PC-9 (cell line): ENCODE measurements at regions of chr7 and their contacts with region 1.

Region 1: GRCh38 chr7:94067506-94067905 is 63.4 kb upstream of the BET1 start:
- DNase-seq: no peak
- H3K4me3 ChIP-seq: no peak overlapping the region
- H3K27ac ChIP-seq: no peak overlapping the region
- H3K4me1 ChIP-seq: peaks cover 26% of the 10 kb centered on the region
- H3K27me3 ChIP-seq: no peaks in the 10 kb centered on the region
- CTCF ChIP-seq: no peak

Region 2: GRCh38 chr7:92121681-92122080 is 1945.8 kb before region 1 on chr7:
- CTCF ChIA-PET with region 1: interaction called, 14 read pairs
- POLR2A ChIA-PET with region 1: no interaction called
- intact Hi-C with region 1: no loop called
- DNase-seq: no peak
- H3K4me3 ChIP-seq: no peak overlapping the region
- H3K27ac ChIP-seq: no peak overlapping the region
- H3K4me1 ChIP-seq: no peaks in the 10 kb centered on the region
- H3K27me3 ChIP-seq: no peaks in the 10 kb centered on the region
- CTCF ChIP-seq: no peak

Region 3: GRCh38 chr7:93646538-93646937 is 421.0 kb before region 1 on chr7:
- CTCF ChIA-PET with region 1: no interaction called
- POLR2A ChIA-PET with region 1: no interaction called
- intact Hi-C with region 1: no loop called
- DNase-seq: no peak
- H3K4me3 ChIP-seq: no peak overlapping the region
- H3K27ac ChIP-seq: no peak overlapping the region
- H3K4me1 ChIP-seq: no peaks in the 10 kb centered on the region
- H3K27me3 ChIP-seq: no peaks in the 10 kb centered on the region
- CTCF ChIP-seq: no peak

Region 4: GRCh38 chr7:93873998-93874574 is 193.4 kb before region 1 on chr7:
- CTCF ChIA-PET with region 1: no interaction called
- POLR2A ChIA-PET with region 1: no interaction called
- intact Hi-C with region 1: no loop called
- DNase-seq: no peak
- H3K4me3 ChIP-seq: no peak overlapping the region
- H3K27ac ChIP-seq: no peak overlapping the region
- H3K4me1 ChIP-seq: no peaks in the 10 kb centered on the region
- H3K27me3 ChIP-seq: no peaks in the 10 kb centered on the region
- CTCF ChIP-seq: no peak

Region 5: DNA sequence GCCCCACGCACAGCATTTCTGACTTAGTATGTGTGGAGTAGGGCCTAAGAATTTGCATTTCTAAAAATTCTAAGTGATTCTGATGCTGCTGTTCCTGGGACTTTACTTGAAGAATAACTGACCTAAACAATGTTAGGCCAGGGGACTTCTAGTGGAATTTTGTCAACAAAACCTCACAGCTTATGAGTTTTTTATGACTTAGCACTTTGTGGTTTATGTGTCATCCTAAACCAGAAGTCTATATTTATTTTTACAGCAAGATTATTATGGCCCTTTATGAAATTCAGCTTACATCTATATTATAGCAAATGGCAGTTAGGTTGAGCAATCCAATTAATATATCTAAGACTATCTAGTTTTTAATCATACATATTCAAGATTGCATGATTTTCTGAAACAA is 38.7 kb before region 1 on chr7:
- CTCF ChIA-PET with region 1: no interaction called
- POLR2A ChIA-PET with region 1: no interaction called
- intact Hi-C with region 1: no loop called
- DNase-seq: no peak
- H3K4me3 ChIP-seq: no peak overlapping the region
- H3K27ac ChIP-seq: no peak overlapping the region
- H3K4me1 ChIP-seq: no peaks in the 10 kb centered on the region
- H3K27me3 ChIP-seq: no peaks in the 10 kb centered on the region
- CTCF ChIP-seq: no peak